H1 (cell line): ENCODE measurements at regions of chr16 and their contacts with region 1.

Region 1: DNA sequence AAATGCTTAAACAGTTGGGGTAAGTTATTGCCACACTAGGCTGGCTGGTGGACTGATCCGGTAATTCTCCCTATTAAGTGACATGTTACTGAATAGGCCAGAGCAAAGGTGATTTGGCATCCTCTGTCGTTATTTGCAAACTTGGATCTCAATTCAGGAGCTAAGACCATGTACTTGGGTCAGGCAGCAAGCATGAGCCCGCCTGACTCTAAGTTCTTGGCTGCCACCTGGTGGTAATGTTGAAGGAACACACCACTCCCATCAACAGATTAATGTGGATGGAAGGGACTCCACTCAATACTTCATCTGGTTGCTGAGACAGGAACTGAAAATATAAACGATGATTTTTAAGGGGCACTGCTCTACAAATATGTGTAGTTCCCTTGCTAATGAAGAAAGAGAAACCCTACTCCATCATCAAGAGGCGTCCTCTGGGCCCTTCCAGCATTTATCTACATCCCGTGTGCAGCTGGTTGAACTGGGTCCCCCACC is 70.8 kb downstream of the EMP2 start:
- DNase-seq: peak; percentile 33 to 63
- H3K4me3 ChIP-seq: no peak overlapping the region
- H3K27ac ChIP-seq: no peak overlapping the region
- H3K4me1 ChIP-seq: peaks cover 0 to 9% (median 3%) of the 10 kb centered on the region in 4 experiments; a peak in 4 of 7 replicates
- H3K27me3 ChIP-seq: no peaks in the 10 kb centered on the region
- CTCF ChIP-seq: peak; percentile 64 to 93 (median 87)
- EP300 ChIP-seq: no peak
- POLR2A ChIP-seq: no peak
- RAD21 ChIP-seq: peak; percentile 97

Region 2: DNA sequence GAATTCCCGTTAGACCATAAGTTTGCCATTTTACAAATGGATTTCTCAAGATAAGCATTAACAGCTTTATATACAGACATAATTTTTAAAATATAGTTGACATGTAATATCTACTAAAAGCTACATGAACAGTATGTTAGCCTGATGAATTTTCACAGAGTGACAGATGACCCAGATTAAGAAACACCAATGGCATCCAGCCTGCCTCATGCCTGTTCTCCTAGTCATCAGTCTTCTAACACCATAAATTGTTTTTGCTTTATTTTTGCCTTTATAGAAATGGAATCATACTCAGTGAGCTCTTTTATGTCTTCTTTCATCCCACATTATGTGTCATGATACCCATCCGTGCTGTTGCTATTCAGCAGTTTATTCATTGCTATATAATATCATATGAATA is 43.8 kb before region 1 on chr16:
- CTCF ChIA-PET with region 1: no interaction called
- POLR2A ChIA-PET with region 1: no interaction called
- DNase-seq: no peak
- H3K4me3 ChIP-seq: no peak overlapping the region
- H3K27ac ChIP-seq: no peak overlapping the region
- H3K4me1 ChIP-seq: no peaks in the 10 kb centered on the region
- H3K27me3 ChIP-seq: no peaks in the 10 kb centered on the region
- CTCF ChIP-seq: no peak
- EP300 ChIP-seq: no peak
- POLR2A ChIP-seq: no peak
- RAD21 ChIP-seq: no peak

Region 3: GRCh38 chr16:10729104-10730048 is 219.8 kb after region 1 on chr16:
- CTCF ChIA-PET with region 1: interaction called, 11 read pairs
- POLR2A ChIA-PET with region 1: no interaction called
- DNase-seq: no peak
- H3K4me3 ChIP-seq: no peak overlapping the region
- H3K27ac ChIP-seq: no peak overlapping the region
- H3K4me1 ChIP-seq: no peaks in the 10 kb centered on the region
- H3K27me3 ChIP-seq: no peaks in the 10 kb centered on the region
- CTCF ChIP-seq: no peak
- EP300 ChIP-seq: no peak
- POLR2A ChIP-seq: no peak
- RAD21 ChIP-seq: peak; percentile 18 to 40; a peak in 3 of 4 replicates

Region 4: GRCh38 chr16:10737068-10737625 is 227.6 kb after region 1 on chr16:
- CTCF ChIA-PET with region 1: interaction called, 70 read pairs
- POLR2A ChIA-PET with region 1: interaction called, 4 read pairs
- DNase-seq: peak; percentile 29 to 68
- H3K4me3 ChIP-seq: no peak overlapping the region
- H3K27ac ChIP-seq: no peak overlapping the region
- H3K4me1 ChIP-seq: no peaks in the 10 kb centered on the region; a peak in 1 of 7 replicates
- H3K27me3 ChIP-seq: no peaks in the 10 kb centered on the region
- CTCF ChIP-seq: peak; percentile 44 to 85 (median 81)
- EP300 ChIP-seq: no peak
- POLR2A ChIP-seq: no peak
- RAD21 ChIP-seq: peak; percentile 95